ENCODE measurements at regions of chr12 and their contacts with region 1.

Region 1: DNA sequence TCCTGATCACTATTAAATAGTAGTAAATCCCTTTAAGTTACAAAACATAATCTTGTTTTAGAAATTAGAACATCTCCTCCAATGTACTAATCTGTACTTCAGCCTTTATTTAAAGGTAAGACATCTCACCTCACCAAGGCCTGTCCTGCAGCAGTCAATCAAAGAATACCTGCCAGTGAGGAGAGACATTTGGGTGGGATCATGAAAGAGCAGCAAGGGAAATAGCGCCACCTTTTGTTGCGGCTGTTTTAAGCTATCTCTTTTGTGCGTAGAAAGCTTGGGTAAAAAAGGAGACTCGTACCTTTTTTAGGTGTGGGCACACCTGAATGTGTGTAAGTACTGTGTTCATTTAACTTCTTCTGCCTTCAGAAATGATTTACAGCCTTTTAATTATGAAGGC is 117.8 kb upstream of the TMTC1 start:
- DNase-seq: no peak
- H3K4me3 ChIP-seq: no peak overlapping the region
- H3K27ac ChIP-seq: no peak overlapping the region
- H3K4me1 ChIP-seq: no peaks in the 10 kb centered on the region
- H3K27me3 ChIP-seq: no peaks in the 10 kb centered on the region
- CTCF ChIP-seq: no peak
- EP300 ChIP-seq: no peak
- RAD21 ChIP-seq: no peak

Region 2: GRCh38 chr12:29889737-29890136 is 11.8 kb before region 1 on chr12:
- CTCF ChIA-PET with region 1: interaction called, 17 read pairs
- POLR2A ChIA-PET with region 1: no interaction called
- DNase-seq: peak; percentile 29
- H3K4me3 ChIP-seq: no peak overlapping the region
- H3K27ac ChIP-seq: no peak overlapping the region
- H3K4me1 ChIP-seq: no peaks in the 10 kb centered on the region
- H3K27me3 ChIP-seq: no peaks in the 10 kb centered on the region
- CTCF ChIP-seq: peak; percentile 55
- EP300 ChIP-seq: no peak
- RAD21 ChIP-seq: peak; percentile 48